Activated B cell treated with CpG ODN at 0.5 μM for 24 hours (primary cell): ENCODE measurements at regions of chr14 and their contacts with region 1.

Region 1: DNA sequence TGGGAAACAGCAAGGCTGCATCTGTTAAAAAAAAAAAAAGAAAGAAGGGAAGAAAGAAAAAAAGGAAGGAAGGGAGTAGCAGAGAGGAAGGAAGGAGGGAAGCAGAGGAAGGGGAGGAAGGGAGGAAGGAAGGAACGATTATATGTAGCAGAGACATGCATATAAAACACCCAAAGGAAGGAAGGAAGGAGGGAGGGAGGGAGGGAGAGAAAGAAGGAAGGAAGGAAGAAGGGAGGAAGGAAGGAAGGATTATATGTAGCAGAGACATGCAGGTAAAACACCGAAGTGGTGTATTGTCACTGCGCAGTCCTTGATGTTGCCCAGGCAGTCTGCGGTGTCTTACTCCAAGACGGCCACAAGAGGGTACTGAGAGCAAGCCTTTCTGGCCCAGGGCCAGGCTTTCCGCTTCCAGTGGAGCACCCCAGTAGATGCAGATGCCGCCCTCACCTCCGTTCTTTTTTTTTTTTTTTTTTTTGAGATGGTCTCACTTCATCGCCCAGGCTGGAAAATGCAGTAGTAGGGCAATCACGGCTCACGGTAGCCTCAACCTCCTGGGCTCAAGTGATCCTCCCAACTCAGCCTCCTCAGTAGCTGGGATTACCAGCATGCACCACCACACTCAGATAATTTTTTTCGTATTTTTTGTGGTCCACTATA is 5.8 kb upstream of the LBHD2 start:
- DNase-seq: peak; percentile 46
- ATAC-seq: peak; percentile 66
- H3K4me3 Mint-ChIP-seq: no peak overlapping the region
- H3K27ac Mint-ChIP-seq: no peak overlapping the region
- H3K4me1 Mint-ChIP-seq: peaks cover 5% of the 10 kb centered on the region
- H3K27me3 Mint-ChIP-seq: no peaks in the 10 kb centered on the region
- CTCF ChIP-seq: no peak

Region 2: DNA sequence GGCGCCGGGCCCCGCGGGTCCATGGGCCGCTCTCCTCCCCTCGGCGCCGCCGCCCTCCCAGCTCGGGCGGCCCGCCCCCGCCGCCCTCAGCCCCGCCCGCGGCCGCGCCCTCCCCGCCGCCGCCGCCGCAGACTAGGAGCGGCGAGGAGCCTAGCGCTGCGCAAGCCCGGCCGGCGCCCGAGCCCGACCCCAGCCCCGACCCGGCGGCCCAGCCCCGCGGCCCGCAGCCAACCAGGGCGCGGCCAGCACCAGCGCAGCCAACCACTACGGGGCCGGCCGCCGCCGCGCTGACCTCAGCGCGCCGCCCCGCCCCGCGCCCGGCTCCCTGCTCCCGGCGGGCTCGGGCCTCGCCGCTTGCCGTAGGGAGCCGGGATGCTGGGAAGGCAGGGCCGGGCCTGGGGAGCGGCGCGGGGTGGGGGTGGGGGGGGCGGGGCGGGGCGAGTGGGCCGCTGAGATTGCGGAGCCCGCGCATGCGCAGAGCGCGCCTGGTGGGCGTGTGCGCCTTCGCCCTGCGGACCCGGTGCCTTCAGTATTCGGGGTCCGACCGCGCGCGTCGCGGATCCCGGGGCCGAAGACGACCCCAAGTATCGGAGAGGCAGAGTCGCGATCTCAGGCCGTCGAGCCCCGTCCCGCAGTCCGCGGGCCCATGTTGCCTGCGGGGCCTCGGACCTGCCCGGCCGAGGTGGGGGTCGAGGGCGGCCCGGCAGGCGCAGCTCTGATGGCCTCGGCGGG is 20.7 kb before region 1 on chr14 and contains the start of gene CDC42BPB:
- CTCF ChIA-PET with region 1: no interaction called
- POLR2A ChIA-PET with region 1: interaction called, 4 read pairs
- intact Hi-C with region 1: loop called (anchors 1 kb)
- DNase-seq: peak; percentile 82
- ATAC-seq: peak; percentile 89
- H3K4me3 Mint-ChIP-seq: peak within 1 kb of the TSS; percentile 87
- H3K27ac Mint-ChIP-seq: no peak within 1 kb of the TSS
- H3K4me1 Mint-ChIP-seq: peaks cover 32% of the 10 kb centered on the region
- H3K27me3 Mint-ChIP-seq: peaks cover 2% of the 10 kb centered on the region
- CTCF ChIP-seq: no peak
- total RNA-seq, gene CDC42BPB: 34.2 and 38.5 TPM in 2 replicates

Region 3: GRCh38 chr14:103091041-103091882 is 13.0 kb after region 1 on chr14:
- CTCF ChIA-PET with region 1: interaction called, 3 read pairs
- POLR2A ChIA-PET with region 1: interaction called, 3 read pairs
- intact Hi-C with region 1: loop called (anchors 1 kb)
- DNase-seq: peak; percentile 70
- ATAC-seq: peak; percentile 96
- H3K4me3 Mint-ChIP-seq: peak overlapping the region; percentile 72
- H3K27ac Mint-ChIP-seq: no peak overlapping the region
- H3K4me1 Mint-ChIP-seq: peaks cover 8% of the 10 kb centered on the region
- H3K27me3 Mint-ChIP-seq: peaks cover 7% of the 10 kb centered on the region
- CTCF ChIP-seq: peak; percentile 49

Region 4: DNA sequence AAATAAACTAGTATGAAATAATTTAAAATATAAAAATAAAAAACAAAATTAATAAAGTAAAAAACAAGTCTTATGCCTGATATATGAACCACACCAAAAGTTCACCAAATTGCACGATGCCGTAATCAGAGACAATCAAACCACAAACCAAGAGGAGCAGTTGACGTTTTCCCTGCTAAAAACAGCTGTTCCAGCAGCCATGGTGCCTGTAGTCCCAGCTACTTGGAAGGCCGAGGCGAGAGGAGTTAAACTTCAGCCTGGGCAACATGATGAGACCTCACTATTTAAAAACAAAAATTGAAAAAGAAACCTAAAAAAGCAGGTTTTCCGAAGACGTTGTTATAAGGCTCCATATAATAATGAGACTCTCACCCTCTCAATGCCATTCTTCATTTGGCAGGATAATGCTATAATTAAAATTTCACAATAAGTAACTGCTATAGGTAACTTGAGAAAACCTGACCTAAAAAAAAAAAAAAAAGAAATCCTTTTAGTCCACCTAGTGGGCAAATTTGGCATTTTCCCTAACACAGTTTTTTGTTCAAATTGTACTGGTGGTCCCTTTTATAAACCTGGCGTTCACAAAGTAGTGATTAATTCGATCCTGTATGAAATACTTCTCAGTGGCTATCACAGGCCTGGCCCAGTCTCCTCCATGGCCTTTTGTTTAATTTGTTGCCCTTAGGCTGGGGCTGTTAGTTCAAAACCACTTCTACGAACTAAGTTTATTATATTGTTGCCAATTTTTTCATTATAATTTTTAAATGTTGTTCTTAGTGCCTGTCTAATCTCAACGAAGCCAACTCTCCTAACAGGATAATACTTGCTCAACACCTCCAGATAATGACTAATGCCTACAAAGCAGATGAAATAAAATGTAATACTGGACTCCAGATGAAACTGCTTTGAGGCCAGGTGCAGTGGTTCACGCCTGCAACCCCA is 107.1 kb after region 1 on chr14:
- CTCF ChIA-PET with region 1: interaction called, 8 read pairs
- POLR2A ChIA-PET with region 1: no interaction called
- intact Hi-C with region 1: loop called (anchors 1 kb)
- DNase-seq: no peak
- ATAC-seq: peak; percentile 28
- H3K4me3 Mint-ChIP-seq: no peak overlapping the region
- H3K27ac Mint-ChIP-seq: no peak overlapping the region
- H3K4me1 Mint-ChIP-seq: peaks cover 7% of the 10 kb centered on the region
- H3K27me3 Mint-ChIP-seq: peaks cover 40% of the 10 kb centered on the region
- CTCF ChIP-seq: peak; percentile 61

Region 5: DNA sequence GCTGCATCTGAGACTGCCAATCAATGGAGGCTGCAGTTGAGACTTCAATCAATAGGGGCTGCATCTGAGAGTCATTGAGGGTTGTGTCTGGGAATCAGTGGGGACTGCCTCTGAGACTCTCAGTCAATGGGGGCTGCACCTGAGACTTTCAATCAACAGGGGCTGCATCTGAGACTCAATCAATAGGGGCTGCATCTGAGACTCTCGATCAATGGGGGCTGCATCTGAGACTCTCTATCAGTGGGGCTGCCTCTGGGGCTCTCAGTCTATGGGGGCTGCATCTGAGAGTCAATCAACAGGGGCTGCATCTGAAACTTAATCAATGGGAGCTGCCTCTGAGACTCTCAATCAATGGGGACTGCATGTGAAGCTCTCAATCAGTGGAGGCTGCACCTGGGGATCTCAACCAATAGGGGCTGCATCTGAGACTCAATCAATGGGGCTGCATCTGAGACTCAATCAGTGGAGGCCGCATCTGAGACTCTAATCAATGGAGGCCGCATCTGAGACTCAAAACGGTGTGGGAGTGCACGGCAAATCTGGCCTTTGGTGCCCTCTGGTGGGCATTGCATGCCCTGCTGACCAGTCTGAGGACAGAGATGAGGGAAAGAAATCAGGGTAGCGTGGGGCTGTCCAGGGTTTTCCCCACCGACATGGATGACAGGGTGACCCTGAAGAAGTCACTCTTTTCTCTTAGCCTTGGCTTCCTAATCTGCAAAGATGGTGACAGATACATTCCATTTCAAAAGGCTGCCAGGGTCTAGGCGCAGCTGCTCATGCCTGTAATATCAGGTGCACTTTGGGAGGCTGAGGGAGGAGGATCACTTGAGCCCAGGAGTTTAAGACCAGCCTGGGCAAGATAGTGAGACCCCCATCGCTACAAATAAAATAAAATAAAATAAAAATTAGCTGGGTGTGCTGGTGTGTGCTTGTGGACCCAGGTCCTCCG is 214.5 kb after region 1 on chr14:
- CTCF ChIA-PET with region 1: interaction called, 4 read pairs
- POLR2A ChIA-PET with region 1: no interaction called
- intact Hi-C with region 1: loop called (anchors 1 kb)
- DNase-seq: peak; percentile 73
- ATAC-seq: peak; percentile 99
- H3K4me3 Mint-ChIP-seq: no peak overlapping the region
- H3K27ac Mint-ChIP-seq: no peak overlapping the region
- H3K4me1 Mint-ChIP-seq: peaks cover 6% of the 10 kb centered on the region
- H3K27me3 Mint-ChIP-seq: peaks cover 18% of the 10 kb centered on the region
- CTCF ChIP-seq: peak; percentile 24

Region 6: DNA sequence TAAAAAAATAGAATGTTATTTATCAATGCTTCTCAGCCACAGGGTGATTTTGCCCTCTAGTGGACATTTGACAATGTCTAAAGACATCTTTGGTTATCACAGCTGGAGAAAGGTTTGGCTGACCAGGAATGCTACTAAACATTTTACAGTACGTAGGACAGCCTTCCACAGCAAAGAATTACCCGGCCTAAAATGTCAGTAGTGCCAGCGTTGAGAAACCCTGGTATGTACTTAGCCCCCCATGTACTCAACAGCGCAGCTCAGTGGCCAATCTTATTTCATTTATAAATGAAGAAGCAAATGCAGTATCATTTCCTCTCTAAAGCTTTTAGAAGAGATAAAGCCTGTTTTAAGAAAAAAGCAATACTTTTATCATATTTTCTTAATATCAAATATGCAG is 312.8 kb after region 1 on chr14:
- CTCF ChIA-PET with region 1: no interaction called
- POLR2A ChIA-PET with region 1: no interaction called
- intact Hi-C with region 1: loop called (anchors 1 kb)
- DNase-seq: no peak
- ATAC-seq: peak; percentile 82
- H3K4me3 Mint-ChIP-seq: no peak overlapping the region
- H3K27ac Mint-ChIP-seq: peak overlapping the region; percentile 43
- H3K4me1 Mint-ChIP-seq: peaks cover 72% of the 10 kb centered on the region
- H3K27me3 Mint-ChIP-seq: no peaks in the 10 kb centered on the region
- CTCF ChIP-seq: no peak

Region 7: DNA sequence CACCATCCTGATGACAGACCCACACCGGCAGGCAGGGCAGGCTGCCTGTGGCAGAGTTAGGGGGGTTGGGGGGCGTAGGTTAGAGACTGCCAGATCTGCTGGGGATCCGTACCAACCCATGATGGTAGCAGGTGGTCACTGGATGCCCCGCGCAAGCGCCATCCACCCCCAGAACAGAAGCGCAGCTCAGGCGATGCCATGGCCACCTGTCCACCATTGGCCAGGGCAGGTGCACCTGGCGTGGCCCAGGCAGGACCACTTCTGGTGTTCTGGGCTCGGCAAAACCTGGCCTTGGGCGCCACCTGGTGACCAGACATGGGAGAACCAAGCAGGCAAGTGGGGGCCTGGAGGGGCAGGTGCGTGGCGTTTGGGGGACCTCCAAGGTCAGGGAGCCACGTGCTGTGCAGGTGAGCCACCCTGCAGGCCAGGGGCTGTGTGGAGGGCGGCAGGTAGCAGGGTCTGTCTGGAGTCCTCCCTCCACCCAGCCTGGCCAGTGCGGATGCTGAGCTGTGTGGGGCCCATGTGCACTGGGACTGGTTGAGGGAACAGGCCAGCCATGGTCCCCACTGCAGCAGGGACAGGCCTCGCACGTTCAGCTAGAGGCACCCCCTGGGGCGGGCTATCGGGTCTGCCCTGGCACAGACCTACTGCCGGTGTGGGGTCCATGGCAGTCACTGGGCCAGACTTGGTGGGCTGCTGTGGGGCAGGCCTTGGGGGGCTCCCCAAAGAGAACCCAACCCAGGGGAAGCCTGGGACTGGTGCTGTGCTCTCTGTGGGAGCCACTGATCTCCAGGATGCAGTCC is 468.6 kb after region 1 on chr14:
- CTCF ChIA-PET with region 1: no interaction called
- POLR2A ChIA-PET with region 1: no interaction called
- intact Hi-C with region 1: loop called (anchors 5 kb)
- DNase-seq: peak; percentile 76
- ATAC-seq: peak; percentile 90
- H3K4me3 Mint-ChIP-seq: no peak overlapping the region
- H3K27ac Mint-ChIP-seq: no peak overlapping the region
- H3K4me1 Mint-ChIP-seq: peaks cover 2% of the 10 kb centered on the region
- H3K27me3 Mint-ChIP-seq: no peaks in the 10 kb centered on the region
- CTCF ChIP-seq: peak; percentile 63